Calu3 (cell line): ENCODE measurements at regions of chr5 and their contacts with region 1.

Region 1: DNA sequence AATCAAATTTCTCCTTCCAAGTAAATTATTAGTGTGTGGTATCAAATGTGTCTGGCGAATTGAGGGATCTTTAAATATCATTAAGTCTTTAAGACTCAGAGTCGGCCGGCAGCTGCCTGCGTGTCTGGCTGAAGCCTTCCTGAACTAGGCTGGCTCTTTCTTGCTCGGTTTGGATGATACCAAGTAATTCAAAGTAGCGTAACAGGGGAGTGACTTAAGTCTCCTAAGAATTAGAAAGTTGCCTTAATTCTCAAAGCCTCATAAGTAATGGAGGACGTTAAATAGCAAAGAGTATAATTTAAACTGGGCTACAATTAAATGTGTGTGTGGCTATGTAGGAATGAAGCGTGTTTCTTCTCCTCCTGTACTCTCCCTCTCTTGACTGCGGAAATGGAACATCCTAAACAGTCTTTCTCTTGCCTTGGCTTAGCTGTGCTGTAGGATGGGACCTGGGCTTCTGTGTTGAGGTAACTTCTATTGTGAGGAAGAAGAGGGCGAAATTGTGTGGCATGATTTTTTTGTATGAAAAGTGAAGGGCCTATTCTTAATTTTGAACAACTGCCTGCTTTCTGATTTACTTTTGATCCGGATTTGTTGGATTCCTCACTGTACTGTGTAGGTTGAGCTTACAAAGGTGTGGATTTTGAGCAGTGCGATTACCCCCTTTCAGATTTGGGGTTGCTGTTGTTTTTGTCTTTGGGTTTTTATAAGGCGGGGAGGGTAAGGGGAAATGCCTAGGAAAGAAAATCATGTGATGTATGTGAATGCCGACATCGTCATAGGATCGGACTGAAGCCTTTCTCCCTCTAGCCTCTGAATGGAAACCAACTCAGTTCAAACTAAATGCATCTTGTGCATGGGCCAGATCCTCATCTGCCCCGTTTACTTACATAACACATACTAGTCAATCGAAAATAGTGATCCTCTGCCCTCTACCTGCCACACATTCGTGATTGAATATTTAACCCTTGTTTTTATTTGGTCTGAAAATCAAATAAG is 29.9 kb downstream of the CPEB4 start:
- DNase-seq: peak; percentile 58
- H3K4me3 Mint-ChIP-seq: no peak overlapping the region
- H3K27ac Mint-ChIP-seq: no peak overlapping the region
- H3K4me1 Mint-ChIP-seq: peaks cover 9% of the 10 kb centered on the region
- H3K27me3 Mint-ChIP-seq: no peaks in the 10 kb centered on the region
- CTCF ChIP-seq: no peak

Region 2: GRCh38 chr5:173689737-173690360 is 228.2 kb before region 1 on chr5:
- CTCF ChIA-PET with region 1: interaction called, 3 read pairs
- intact Hi-C with region 1: loop called (anchors 2 kb)
- DNase-seq: peak; percentile 35
- H3K4me3 Mint-ChIP-seq: peak overlapping the region; percentile 28
- H3K27ac Mint-ChIP-seq: peak overlapping the region; percentile 66
- H3K4me1 Mint-ChIP-seq: peaks cover 27% of the 10 kb centered on the region
- H3K27me3 Mint-ChIP-seq: no peaks in the 10 kb centered on the region
- CTCF ChIP-seq: no peak

Region 3: DNA sequence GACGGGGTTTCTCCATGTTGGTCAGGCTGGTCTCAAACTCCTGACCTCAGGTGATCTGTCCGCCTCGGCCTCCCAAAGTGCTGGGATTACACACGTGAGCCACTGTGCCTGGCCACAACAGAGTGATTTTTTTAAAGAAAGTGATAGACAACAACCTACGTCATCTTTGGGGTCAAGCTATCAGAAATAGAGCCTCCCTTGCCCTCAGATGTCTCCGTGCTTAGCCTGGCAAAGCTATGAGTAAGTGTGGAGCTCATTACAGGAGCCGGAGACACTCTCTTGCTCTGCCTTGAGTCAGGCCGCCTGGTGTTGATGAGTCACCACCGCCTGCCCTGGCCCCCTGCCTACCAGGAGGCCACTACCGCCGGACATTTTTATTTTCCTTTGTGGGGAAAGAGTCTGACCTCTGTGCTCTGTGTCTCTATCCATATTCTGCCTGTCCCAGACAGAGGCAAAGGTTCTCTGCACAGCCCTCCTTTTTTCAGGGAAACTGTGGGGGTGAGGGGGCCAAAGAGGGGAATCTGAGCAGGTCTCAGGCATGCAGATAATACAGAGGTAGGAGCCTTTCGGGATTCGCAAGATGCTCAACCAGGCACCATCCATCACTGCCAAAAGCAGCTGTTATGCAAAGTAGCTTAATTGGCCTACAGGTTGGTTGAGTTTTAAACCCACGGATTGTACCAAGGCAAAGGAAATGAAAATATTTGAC is 153.6 kb before region 1 on chr5:
- CTCF ChIA-PET with region 1: no interaction called
- intact Hi-C with region 1: loop called (anchors 1 kb)
- DNase-seq: peak; percentile 92
- H3K4me3 Mint-ChIP-seq: peak overlapping the region; percentile 27
- H3K27ac Mint-ChIP-seq: peak overlapping the region; percentile 96
- H3K4me1 Mint-ChIP-seq: peaks cover 51% of the 10 kb centered on the region
- H3K27me3 Mint-ChIP-seq: no peaks in the 10 kb centered on the region
- CTCF ChIP-seq: no peak

Region 4: GRCh38 chr5:173823711-173824528 is 94.2 kb before region 1 on chr5:
- CTCF ChIA-PET with region 1: no interaction called
- intact Hi-C with region 1: loop called (anchors 1 kb)
- DNase-seq: peak; percentile 86
- H3K4me3 Mint-ChIP-seq: peak overlapping the region; percentile 28
- H3K27ac Mint-ChIP-seq: peak overlapping the region; percentile 60
- H3K4me1 Mint-ChIP-seq: peaks cover 51% of the 10 kb centered on the region
- H3K27me3 Mint-ChIP-seq: no peaks in the 10 kb centered on the region
- CTCF ChIP-seq: no peak

Region 5: DNA sequence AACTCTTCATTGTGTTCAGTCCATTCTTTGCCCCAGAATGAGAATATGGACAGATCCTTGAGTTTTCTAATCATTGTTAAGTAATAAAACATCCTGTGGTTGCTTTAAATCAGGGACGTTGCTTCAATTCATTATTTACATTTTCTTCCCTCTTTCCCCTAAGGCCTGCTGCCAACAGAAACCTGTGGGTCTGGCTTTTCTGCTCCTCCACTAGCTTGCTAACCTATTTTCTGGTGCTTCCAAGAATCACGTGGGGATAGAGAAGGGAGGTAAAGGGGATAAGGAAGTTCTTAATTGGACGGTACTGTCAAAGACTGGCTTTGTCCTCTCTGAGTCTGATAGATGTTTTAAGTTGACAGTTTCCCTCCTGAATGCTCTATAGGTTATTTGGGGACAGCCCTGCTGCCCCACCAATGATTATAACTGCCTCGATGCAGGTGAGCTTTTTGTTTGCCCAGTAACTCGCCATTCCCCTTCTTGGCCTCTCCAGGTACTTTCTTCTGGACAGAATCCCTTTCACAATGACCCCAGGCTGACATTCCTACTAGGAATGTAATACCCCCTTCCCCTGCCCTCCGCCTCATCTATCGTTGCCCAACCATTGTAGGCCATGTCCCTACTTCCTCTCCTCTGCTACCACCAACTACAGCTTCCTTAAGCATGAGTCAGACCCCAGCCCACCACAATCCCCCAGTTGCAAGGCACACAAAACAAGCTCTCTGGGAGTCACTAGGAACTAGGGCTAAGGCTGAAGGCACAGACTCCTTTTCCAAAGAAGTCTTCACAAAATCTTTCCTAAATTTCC is 49.8 kb before region 1 on chr5:
- CTCF ChIA-PET with region 1: no interaction called
- intact Hi-C with region 1: loop called (anchors 1 kb)
- DNase-seq: peak; percentile 73
- H3K4me3 Mint-ChIP-seq: peak overlapping the region; percentile 5
- H3K27ac Mint-ChIP-seq: peak overlapping the region; percentile 42
- H3K4me1 Mint-ChIP-seq: peaks cover 24% of the 10 kb centered on the region
- H3K27me3 Mint-ChIP-seq: no peaks in the 10 kb centered on the region
- CTCF ChIP-seq: no peak

Region 6: DNA sequence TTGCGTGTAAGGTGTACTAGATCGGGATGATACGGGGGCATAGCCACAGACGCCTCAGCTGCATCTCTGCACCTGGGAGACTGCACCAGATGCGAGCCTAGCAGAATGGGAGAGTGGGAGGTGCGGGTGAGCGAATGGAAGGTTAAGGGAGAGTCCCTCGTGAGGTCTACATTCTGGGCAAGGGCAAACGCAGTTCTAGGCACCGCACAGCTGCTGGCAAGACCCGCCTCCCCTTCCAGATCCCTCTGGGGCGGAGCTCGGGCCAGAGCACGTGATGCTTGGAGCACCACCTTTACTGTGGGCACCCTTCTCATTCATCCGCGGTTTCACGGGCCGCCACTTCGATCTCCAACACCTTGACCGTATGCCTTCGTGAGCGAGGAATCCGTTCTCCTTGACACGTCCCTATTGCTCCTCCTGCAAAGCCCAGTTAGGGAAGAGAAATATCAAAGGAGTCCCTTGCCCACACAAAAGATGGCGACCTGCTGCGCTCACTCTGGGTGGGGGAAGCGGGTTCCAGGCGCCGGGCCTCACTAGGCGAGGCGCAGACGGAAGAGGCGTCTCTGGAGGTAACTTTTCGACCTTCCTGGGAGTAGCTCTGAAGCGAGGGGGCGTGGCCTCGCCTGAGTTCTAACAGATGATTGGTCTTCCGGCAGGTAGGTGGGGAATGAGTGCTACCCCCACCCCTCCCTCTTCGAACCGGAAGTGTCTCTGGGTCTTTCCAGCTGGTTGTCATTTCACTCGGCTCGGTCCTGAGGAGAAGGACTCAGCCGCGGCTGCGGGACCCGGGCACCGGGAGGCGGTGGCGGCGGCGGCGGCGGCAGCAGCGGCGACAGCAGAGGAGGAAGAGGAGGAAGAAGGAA is 30.2 kb before region 1 on chr5 and contains the start of gene CPEB4:
- CTCF ChIA-PET with region 1: interaction called, 5 read pairs
- intact Hi-C with region 1: loop called (anchors 2 kb)
- DNase-seq: peak; percentile 99
- H3K4me3 Mint-ChIP-seq: peak within 1 kb of the TSS; percentile 90
- H3K27ac Mint-ChIP-seq: peak within 1 kb of the TSS; percentile 100
- H3K4me1 Mint-ChIP-seq: peaks cover 74% of the 10 kb centered on the region
- H3K27me3 Mint-ChIP-seq: no peaks in the 10 kb centered on the region
- CTCF ChIP-seq: no peak
- total RNA-seq, gene CPEB4: 30.8 and 32.0 TPM in 2 replicates

Region 7: DNA sequence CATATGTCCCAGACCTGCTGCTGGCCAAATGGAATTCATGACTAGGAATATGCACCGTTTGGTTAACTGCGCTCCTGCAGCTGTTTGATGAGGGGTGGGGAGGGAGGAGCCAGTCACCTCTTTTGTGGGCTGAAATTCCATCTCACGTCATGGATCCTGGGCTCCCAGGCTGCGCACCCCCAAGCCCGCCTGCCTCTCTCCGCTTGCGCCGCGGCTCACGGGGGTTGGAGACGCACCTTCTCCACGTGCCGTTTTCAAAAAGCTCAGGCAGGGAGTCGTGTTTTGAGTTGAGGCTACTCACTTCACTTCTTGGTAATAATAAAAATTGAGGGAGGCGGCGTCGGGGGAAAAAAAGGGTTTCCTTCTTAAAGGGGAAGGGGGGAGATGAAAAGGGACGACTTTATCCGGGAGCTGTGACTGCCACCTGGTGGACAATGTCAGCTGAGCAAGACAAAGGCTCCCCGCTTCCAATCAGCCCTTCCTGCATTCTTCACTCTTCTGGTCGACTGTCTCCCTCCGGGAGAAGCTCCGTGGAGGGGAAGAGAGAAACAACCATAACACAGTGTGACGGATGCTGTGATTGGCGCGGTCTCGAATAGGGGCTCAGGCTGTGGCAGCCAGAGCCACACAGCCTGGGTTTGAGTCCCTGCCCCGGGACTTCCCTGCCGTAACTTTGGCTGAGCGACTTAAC is 55.0 kb after region 1 on chr5:
- CTCF ChIA-PET with region 1: interaction called, 5 read pairs
- intact Hi-C with region 1: loop called (anchors 2 kb)
- DNase-seq: peak; percentile 85
- H3K4me3 Mint-ChIP-seq: peak overlapping the region; percentile 73
- H3K27ac Mint-ChIP-seq: peak overlapping the region; percentile 60
- H3K4me1 Mint-ChIP-seq: peaks cover 22% of the 10 kb centered on the region
- H3K27me3 Mint-ChIP-seq: peaks cover 21% of the 10 kb centered on the region
- CTCF ChIP-seq: peak; percentile 82